ENCODE measurements at regions of chr1 and their contacts with region 1.

Region 1: GRCh38 chr1:185595835-185596667 is 138.1 kb upstream of the HMCN1 start:
- DNase-seq: peak; percentile 23 to 77
- H3K4me3 ChIP-seq: no peak overlapping the region
- H3K27ac ChIP-seq: no peak overlapping the region
- H3K4me1 ChIP-seq: no peaks in the 10 kb centered on the region
- H3K27me3 ChIP-seq: no peaks in the 10 kb centered on the region
- CTCF ChIP-seq: peak in 2 of 3 experiments; percentile 73 to 88; a peak in 3 of 4 replicates
- EP300 ChIP-seq: no peak
- POLR2A ChIP-seq: no peak
- RAD21 ChIP-seq: peak; percentile 57 to 77

Region 2: DNA sequence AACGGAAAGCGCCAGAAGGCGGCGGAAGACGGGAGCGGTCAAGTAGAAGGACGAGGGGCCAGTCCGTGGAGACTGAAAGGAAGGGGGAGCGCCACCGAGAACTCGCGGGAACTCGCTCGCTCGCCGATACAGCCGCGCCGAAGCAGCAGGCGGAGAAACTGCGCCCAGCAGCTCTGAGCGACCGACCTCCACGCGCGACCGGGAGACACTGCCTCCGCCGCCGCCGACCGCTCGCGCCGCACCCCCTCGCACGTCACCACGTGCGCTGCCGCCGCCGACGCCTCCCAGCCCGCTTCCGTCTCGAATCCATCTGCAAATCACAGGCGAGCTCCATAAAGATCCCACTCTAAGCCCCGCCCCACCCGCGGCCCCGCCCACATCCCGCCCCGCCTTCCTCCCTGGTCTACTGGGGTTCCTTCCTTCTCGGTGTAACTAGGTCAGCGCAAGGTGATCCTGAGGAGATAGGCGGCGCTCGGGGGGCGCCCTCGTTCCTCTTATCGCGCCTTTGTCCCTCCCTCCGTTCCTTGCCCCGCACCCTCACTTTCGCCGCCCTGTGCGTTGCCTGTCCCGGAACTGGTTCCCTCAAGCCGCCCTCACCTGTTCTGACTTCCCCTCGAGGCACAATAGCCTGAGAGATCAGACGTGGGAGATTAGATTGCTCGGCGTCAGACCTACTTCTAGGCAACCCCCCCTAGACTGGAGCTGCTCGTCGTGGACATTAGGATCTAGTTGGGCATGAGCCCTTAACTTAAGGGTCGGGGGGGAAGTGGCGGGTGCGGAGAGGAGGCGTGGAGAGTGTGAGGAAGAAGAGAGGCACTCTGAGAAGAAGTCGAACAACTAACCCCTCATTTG is 278.8 kb before region 1 on chr1 and contains the start of gene IVNS1ABP:
- CTCF ChIA-PET with region 1: interaction called, 32 read pairs
- POLR2A ChIA-PET with region 1: interaction called, 8 read pairs
- DNase-seq: peak; percentile 88 to 93
- H3K4me3 ChIP-seq: peak within 1 kb of the TSS; percentile 89 to 97 (median 92)
- H3K27ac ChIP-seq: peak within 1 kb of the TSS; percentile 92
- H3K4me1 ChIP-seq: peaks cover 0 to 4% (median 3%) of the 10 kb centered on the region in 4 experiments; a peak in 5 of 7 replicates
- H3K27me3 ChIP-seq: no peaks in the 10 kb centered on the region
- CTCF ChIP-seq: peak; percentile 47 to 68 (median 64)
- EP300 ChIP-seq: peak in 1 of 2 experiments; percentile 56; a peak in 1 of 3 replicates
- POLR2A ChIP-seq: peak; percentile 86 to 95
- RAD21 ChIP-seq: peak; percentile 73
- total RNA-seq, gene IVNS1ABP: 175 and 189 TPM in 2 replicates

Region 3: DNA sequence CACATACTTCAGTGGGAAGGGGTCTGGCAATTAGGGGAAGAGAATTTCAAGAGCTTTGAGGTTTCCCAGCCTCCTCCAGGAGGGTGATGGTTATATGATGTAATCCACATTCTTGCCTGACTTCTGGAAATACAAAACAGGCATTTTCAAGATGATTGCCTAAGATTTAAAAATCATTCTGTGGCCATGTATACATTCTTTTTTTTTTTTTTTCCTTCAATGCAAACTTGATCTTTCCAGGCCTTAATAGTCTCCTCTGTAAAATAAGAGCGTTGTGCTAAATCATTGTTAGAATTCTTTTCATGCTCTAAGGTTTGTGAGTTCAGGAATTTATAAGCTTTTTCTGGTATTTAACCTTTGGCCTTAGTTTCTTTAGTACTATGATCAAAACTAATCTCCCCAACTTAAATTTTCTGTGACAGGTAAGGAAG is 54.2 kb before region 1 on chr1:
- CTCF ChIA-PET with region 1: interaction called, 12 read pairs
- POLR2A ChIA-PET with region 1: no interaction called
- DNase-seq: no peak
- H3K4me3 ChIP-seq: no peak overlapping the region
- H3K27ac ChIP-seq: no peak overlapping the region
- H3K4me1 ChIP-seq: peaks cover 2 to 12% (median 5%) of the 10 kb centered on the region in 4 experiments; a peak in 5 of 7 replicates
- H3K27me3 ChIP-seq: peaks cover 0 to 4% (median 2%) of the 10 kb centered on the region in 4 experiments; a peak in 1 of 7 replicates
- CTCF ChIP-seq: no peak
- EP300 ChIP-seq: no peak
- POLR2A ChIP-seq: no peak
- RAD21 ChIP-seq: no peak

Region 4: DNA sequence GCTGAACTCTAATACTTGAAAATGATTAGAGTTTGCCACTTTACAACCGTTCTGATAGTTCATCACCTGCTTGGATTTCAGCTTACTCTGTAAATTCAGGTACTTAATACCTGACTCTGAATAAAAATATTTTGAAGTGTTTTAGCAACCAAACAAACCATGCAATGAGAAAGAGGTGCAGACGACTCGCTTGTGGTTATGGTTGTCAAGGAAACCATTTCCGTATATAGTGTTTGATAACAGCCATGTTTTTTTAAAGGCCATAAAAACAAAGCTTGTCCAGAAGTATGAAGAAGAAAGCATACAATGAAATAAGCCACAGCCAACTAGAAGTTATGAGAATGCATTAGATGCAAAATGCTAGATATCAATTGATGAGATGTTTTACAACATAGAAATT is 29.1 kb before region 1 on chr1:
- CTCF ChIA-PET with region 1: interaction called, 33 read pairs
- POLR2A ChIA-PET with region 1: no interaction called
- DNase-seq: no peak
- H3K4me3 ChIP-seq: no peak overlapping the region
- H3K27ac ChIP-seq: no peak overlapping the region
- H3K4me1 ChIP-seq: no peaks in the 10 kb centered on the region
- H3K27me3 ChIP-seq: no peaks in the 10 kb centered on the region
- CTCF ChIP-seq: no peak
- EP300 ChIP-seq: no peak
- POLR2A ChIP-seq: no peak
- RAD21 ChIP-seq: no peak

Region 5: DNA sequence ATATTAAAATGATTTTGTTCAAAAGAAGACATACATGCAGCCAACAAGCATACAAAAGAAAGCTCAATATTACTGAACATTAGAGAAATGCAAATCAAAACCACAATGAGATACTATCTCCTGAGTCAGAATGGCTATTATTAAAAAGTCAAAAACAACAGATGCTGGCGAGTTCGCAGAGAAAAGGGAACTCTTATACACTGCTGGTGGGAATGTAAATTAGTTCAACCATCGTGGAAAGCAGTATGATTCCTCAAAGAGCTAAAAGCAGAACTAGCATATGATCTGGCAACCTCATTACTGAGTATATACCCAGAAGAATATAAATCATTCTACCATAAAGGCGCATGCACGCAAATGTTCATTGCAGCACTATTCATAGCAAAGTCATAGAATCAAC is 12.1 kb after region 1 on chr1:
- CTCF ChIA-PET with region 1: interaction called, 19 read pairs
- POLR2A ChIA-PET with region 1: no interaction called
- DNase-seq: no peak
- H3K4me3 ChIP-seq: no peak overlapping the region
- H3K27ac ChIP-seq: no peak overlapping the region
- H3K4me1 ChIP-seq: no peaks in the 10 kb centered on the region
- H3K27me3 ChIP-seq: no peaks in the 10 kb centered on the region
- CTCF ChIP-seq: no peak
- EP300 ChIP-seq: no peak
- POLR2A ChIP-seq: no peak
- RAD21 ChIP-seq: no peak

Region 6: DNA sequence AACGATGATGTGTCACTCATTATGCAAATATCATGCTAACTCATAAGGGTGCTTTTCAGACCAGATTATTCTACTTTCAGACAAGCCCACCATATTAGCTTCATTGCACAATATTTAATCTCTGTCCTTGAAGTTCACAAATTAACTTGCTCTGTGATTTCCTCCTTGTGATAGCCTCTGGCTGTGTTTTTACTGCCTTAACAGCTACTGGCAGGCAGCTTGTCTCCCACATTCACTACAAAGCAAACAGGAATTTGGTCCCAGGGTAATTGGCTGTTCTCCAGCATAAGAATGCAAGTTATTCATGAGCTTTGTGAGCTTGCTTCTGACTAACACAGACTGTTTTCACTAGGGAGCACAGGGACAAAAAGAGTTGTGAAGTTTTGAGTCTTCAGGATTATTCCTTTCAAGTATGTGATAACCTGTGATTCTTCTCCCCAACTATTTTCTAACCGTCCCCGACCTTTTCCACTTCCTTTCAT is 50.2 kb after region 1 on chr1:
- CTCF ChIA-PET with region 1: interaction called, 20 read pairs
- POLR2A ChIA-PET with region 1: no interaction called
- DNase-seq: peak in 1 of 2 experiments; percentile 83
- H3K4me3 ChIP-seq: peak overlapping the region in 1 of 4 experiments; percentile 45; a peak in 1 of 8 replicates
- H3K27ac ChIP-seq: peak overlapping the region; percentile 66; the same call in 1 of the 2 replicates
- H3K4me1 ChIP-seq: peaks cover 0 to 13% (median 6%) of the 10 kb centered on the region in 4 experiments; a peak in 4 of 7 replicates
- H3K27me3 ChIP-seq: no peaks in the 10 kb centered on the region
- CTCF ChIP-seq: no peak
- EP300 ChIP-seq: 0 out of 3 replicates have a peak, but pooled peaks of 1 of the 2 experiments have one; percentile 60
- POLR2A ChIP-seq: peak in 1 of 2 experiments; percentile 43; a peak in 1 of 3 replicates
- RAD21 ChIP-seq: 0 out of 4 replicates have a peak, but pooled peaks of 1 of the 2 experiments have one; percentile 13

Region 7: GRCh38 chr1:185670187-185670627 is 74.2 kb after region 1 on chr1:
- CTCF ChIA-PET with region 1: interaction called, 24 read pairs
- POLR2A ChIA-PET with region 1: no interaction called
- DNase-seq: peak in 1 of 2 experiments; percentile 62
- H3K4me3 ChIP-seq: no peak overlapping the region
- H3K27ac ChIP-seq: no peak overlapping the region
- H3K4me1 ChIP-seq: peaks cover 0 to 2% (median 0%) of the 10 kb centered on the region in 4 experiments; a peak in 2 of 7 replicates
- H3K27me3 ChIP-seq: no peaks in the 10 kb centered on the region
- CTCF ChIP-seq: peak in 2 of 3 experiments; percentile 57; a peak in 3 of 4 replicates
- EP300 ChIP-seq: no peak
- POLR2A ChIP-seq: no peak
- RAD21 ChIP-seq: peak; percentile 77 to 82

Region 8: DNA sequence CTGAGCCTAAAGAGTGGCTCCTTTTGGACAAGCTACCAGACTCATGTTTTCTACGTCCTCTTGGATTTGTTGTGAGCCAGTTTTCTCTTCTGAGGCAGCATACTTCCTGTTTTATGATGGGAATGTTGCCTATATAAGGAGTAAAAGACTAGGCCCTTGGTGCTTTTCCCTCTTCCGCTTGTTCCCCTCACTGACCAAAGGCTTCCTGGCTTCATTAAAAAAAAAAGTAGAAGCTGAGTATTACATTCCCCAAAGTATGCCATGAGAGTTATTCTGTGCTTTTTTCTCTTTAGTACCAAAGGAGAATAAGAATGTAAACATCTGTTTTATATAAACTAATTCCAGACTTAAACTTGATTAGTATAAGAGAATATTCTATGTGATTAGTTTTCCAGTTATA is 131.7 kb after region 1 on chr1:
- CTCF ChIA-PET with region 1: no interaction called
- POLR2A ChIA-PET with region 1: no interaction called
- DNase-seq: no peak
- H3K4me3 ChIP-seq: no peak overlapping the region
- H3K27ac ChIP-seq: no peak overlapping the region
- H3K4me1 ChIP-seq: no peaks in the 10 kb centered on the region
- H3K27me3 ChIP-seq: no peaks in the 10 kb centered on the region
- CTCF ChIP-seq: no peak
- EP300 ChIP-seq: no peak
- POLR2A ChIP-seq: no peak
- RAD21 ChIP-seq: no peak